ENCODE measurements at regions of chr3 and their contacts with region 1.

Region 1: DNA sequence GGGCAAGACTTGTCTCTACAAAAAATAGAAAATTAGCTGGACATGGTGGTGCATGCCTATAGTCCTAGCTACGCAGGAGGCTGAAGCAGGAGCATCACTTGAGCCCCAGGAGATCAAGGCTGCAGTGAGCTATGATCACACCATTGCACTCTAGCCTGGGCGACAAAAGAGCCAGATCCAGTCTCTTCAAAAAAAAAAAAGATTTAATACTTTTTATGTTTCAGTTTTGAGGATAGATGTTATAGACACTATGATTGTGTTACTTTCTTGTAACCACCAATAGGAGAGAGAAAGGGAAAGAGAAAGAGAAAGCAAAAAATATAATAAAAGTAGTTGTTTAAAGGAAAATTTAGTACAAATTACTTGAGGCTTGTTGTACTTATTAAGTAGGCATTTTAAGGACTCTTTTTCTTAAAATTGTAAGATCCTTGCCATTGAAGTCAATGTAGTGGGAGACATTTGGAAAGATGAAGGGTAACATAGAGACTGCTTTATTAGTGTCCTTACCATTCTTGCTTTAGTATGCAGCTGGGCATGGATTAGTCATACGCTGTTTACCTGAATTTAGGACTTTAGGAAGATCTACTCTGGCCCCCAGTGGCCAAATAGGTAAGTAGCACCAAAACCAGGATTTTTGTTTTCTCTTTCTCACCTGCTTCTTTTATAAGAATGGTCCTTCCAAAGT is 35.1 kb upstream of the ZDHHC23 start:
- DNase-seq: peak; percentile 8
- H3K4me3 Mint-ChIP-seq: no peak overlapping the region
- H3K27ac Mint-ChIP-seq: no peak overlapping the region
- H3K4me1 Mint-ChIP-seq: peaks cover 7% of the 10 kb centered on the region
- H3K27me3 Mint-ChIP-seq: no peaks in the 10 kb centered on the region

Region 2: DNA sequence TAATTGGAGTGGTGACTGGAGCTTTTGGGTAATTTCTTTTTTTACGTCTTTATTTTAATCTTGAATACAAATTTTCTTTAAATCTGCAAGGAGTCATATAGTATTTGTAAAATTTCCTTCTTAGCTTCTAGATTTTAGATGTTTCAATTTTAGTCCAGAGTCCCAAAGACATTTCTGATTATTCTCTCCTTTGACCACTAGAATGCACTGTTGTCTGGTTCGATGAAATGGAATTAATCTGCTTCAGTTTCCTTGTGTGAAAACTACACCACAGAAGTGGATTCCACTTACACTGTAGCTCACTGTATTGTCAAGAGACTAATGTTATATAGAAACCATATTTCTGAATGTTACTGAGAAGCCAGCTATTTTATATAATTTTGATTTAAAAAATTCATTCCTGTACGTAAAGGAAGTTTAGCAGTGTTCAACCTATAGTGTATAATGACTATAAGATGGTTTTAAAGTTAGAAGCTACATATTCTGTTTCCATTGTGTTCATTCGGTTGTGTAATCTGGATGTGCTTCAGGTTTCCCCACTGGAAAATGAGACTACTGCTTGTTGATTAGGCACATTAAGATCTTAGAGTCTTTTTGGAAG is 68.0 kb before region 1 on chr3:
- intact Hi-C with region 1: loop called (anchors 1 kb)
- DNase-seq: no peak
- H3K4me3 Mint-ChIP-seq: no peak overlapping the region
- H3K27ac Mint-ChIP-seq: no peak overlapping the region
- H3K4me1 Mint-ChIP-seq: no peaks in the 10 kb centered on the region
- H3K27me3 Mint-ChIP-seq: peaks cover 4% of the 10 kb centered on the region

Region 3: GRCh38 chr3:113897373-113897777 is 15.3 kb before region 1 on chr3:
- intact Hi-C with region 1: no loop called
- DNase-seq: no peak
- H3K4me3 Mint-ChIP-seq: no peak overlapping the region
- H3K27ac Mint-ChIP-seq: no peak overlapping the region
- H3K4me1 Mint-ChIP-seq: peaks cover 6% of the 10 kb centered on the region
- H3K27me3 Mint-ChIP-seq: peaks cover 3% of the 10 kb centered on the region

Measured in activated T-helper 1 cell treated with anti-CD3 and anti-CD28 coated beads, Interleukin-12 subunit alpha, Interleukin-12 subunit beta, Interleukin-2, Interleukin-4 antibody, amounts not matched to agents 30 ng/mL and 10 ng/mL and 1 ng/mL, durations not matched to agents 14 hours and 24 hours and 36 hours (primary cell).